ENCODE measurements at regions of chr9 and their contacts with region 1.

Region 1: DNA sequence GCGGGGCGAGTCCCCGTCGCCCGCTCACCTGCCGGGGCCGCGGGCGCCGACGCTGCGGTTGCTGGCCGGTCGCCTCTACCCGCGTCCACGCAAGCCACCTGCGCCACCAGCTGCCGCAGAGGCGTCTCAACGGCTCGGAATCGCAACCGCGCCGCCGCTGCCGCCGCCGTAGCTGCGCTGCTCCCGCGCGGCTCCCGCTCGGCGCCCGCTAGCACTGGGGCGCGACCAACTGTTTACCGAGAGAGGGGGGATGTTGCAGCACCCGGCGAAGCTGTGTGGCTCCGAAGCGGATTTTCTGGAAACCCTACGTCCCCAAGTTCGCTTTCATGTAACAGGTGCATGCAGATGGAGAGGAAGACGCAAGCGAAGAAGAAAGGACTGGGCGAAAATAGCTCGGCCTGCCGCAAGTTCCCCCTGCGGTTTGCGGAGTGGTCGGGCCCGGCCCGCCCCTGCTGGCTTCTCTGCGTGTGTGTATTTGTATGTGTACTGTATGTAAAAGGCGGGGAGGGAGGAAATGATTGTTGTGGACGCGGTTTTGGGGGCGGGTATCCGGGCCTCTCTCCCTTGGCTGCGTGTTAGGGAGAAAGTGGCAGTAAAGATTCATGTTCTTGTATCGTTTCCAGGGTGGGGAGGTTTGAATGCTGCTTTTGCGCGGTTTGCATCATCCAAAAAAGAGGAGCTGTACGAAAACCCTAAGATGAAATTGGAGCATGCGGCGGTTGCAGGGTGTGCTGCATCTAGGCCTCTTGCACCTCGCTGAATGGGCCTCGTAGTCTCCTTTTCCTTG is at the start of gene PSIP1:
- DNase-seq: peak; percentile 82 to 96 (median 94)
- ATAC-seq: peak; percentile 91
- H3K4me3 ChIP-seq: peak within 1 kb of the TSS; percentile 88
- H3K4me3 Mint-ChIP-seq: peak within 1 kb of the TSS; percentile 90 to 99 (median 95)
- H3K27ac ChIP-seq: peak within 1 kb of the TSS; percentile 88
- H3K27ac Mint-ChIP-seq: peak within 1 kb of the TSS; percentile 96 to 100 (median 99)
- H3K4me1 ChIP-seq: peaks cover 19 to 39% of the 10 kb centered on the region in 2 donors
- H3K4me1 Mint-ChIP-seq: peaks cover 44 to 82% (median 66%) of the 10 kb centered on the region in 7 donors
- H3K27me3 ChIP-seq: no peaks in the 10 kb centered on the region
- H3K27me3 Mint-ChIP-seq: no peaks in the 10 kb centered on the region
- total RNA-seq, gene PSIP1: 97.8 to 213 (median 120) TPM

Region 2: GRCh38 chr9:15306757-15307534 is 204.0 kb before region 1 on chr9 and contains the start of gene TTC39B:
- CTCF ChIA-PET with region 1: no interaction called
- POLR2A ChIA-PET with region 1: interaction called, 19 read pairs
- intact Hi-C with region 1: loop called in 1 of 2 experiments (anchors 1 kb)
- DNase-seq: peak; percentile 34 to 88 (median 53)
- ATAC-seq: peak; percentile 87
- H3K4me3 ChIP-seq: peak within 1 kb of the TSS; percentile 86
- H3K4me3 Mint-ChIP-seq: peak within 1 kb of the TSS; percentile 89 to 99 (median 97)
- H3K27ac ChIP-seq: peak within 1 kb of the TSS; percentile 81
- H3K27ac Mint-ChIP-seq: peak within 1 kb of the TSS; percentile 84 to 97 (median 95)
- H3K4me1 ChIP-seq: peaks cover 25 to 44% of the 10 kb centered on the region in 2 donors
- H3K4me1 Mint-ChIP-seq: peaks cover 37 to 66% (median 61%) of the 10 kb centered on the region in 7 donors
- H3K27me3 ChIP-seq: no peaks in the 10 kb centered on the region
- H3K27me3 Mint-ChIP-seq: no peaks in the 10 kb centered on the region
- total RNA-seq, gene TTC39B: 29.1 to 49.3 (median 42.8) TPM

Region 3: GRCh38 chr9:15344191-15344590 is 166.8 kb before region 1 on chr9:
- CTCF ChIA-PET with region 1: no interaction called
- POLR2A ChIA-PET with region 1: no interaction called
- intact Hi-C with region 1: no loop called
- DNase-seq: no peak
- ATAC-seq: no peak
- H3K4me3 ChIP-seq: no peak overlapping the region
- H3K4me3 Mint-ChIP-seq: peak overlapping the region in 1 of 10 donors; percentile 7
- H3K27ac ChIP-seq: no peak overlapping the region
- H3K27ac Mint-ChIP-seq: peak overlapping the region in 1 of 9 donors; percentile 41
- H3K4me1 ChIP-seq: no peaks in the 10 kb centered on the region
- H3K4me1 Mint-ChIP-seq: peaks cover 0 to 5% (median 0%) of the 10 kb centered on the region in 7 donors
- H3K27me3 ChIP-seq: no peaks in the 10 kb centered on the region
- H3K27me3 Mint-ChIP-seq: peaks cover 0 to 2% (median 0%) of the 10 kb centered on the region in 5 donors

Region 4: DNA sequence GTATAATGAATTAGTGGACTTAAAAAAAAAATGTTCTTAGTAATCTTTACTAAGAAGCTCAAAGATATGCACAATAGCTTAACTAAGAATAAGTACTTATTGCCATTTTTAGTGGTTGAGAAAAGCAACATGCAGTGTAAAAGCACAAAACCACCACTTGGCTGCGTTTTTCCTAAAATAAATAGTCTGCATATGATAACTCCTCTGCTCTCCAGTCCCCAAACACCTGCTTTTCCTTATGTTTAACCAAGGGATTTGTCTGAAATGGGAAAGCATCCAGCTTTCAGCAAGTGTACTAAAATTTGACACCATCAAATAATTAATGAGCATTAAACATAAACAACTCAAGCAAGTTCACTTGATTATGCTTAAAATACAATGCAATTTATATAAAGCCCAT is 41.6 kb before region 1 on chr9:
- CTCF ChIA-PET with region 1: interaction called, 3 read pairs
- POLR2A ChIA-PET with region 1: interaction called, 4 read pairs
- intact Hi-C with region 1: loop called in 1 of 2 experiments (anchors 5 kb)
- DNase-seq: no peak
- ATAC-seq: no peak
- H3K4me3 ChIP-seq: no peak overlapping the region
- H3K4me3 Mint-ChIP-seq: no peak overlapping the region
- H3K27ac ChIP-seq: no peak overlapping the region
- H3K27ac Mint-ChIP-seq: peak overlapping the region in 7 of 9 donors; percentile 6 to 82 (median 57)
- H3K4me1 ChIP-seq: no peaks in the 10 kb centered on the region
- H3K4me1 Mint-ChIP-seq: peaks cover 5 to 31% (median 19%) of the 10 kb centered on the region in 7 donors
- H3K27me3 ChIP-seq: no peaks in the 10 kb centered on the region
- H3K27me3 Mint-ChIP-seq: no peaks in the 10 kb centered on the region

Region 5: DNA sequence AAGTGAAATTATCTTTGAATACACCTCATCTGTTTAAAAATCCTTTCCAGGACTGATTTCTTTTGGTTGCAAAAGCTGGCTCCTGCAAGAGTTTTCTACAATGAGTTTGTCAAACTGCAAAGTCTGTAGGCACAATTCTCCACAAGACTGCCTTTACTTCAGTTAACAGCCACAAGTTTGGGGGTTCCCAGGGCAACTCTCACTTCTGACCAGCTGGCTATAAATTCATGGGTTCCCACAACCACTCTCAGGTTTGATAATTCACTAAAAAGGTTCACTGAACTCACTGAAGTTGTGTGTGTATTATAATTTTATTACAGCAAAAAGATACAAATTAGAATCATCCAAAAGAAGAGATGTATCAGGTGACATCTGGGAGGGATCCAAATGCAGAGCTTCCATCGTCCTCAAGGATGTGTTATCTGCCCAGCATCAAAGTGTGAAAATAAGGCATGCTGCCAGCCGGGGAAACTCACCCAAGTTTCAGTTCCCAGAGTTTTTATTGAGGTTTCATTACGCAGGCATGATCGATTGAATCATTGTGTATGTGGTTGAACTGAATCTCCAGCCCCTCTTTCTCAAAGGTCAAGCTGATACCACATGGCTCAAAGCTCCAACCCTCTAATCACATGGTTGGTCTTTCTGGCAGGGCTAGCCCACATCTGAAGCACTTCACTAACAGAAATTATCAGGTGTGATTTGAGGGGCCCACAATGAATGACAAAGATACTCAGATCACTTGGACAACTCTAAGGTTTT is 18.8 kb after region 1 on chr9:
- CTCF ChIA-PET with region 1: interaction called, 3 read pairs
- POLR2A ChIA-PET with region 1: interaction called, 8 read pairs
- intact Hi-C with region 1: loop called in 1 of 2 experiments (anchors 1 kb)
- DNase-seq: no peak
- ATAC-seq: no peak
- H3K4me3 ChIP-seq: no peak overlapping the region
- H3K4me3 Mint-ChIP-seq: no peak overlapping the region
- H3K27ac ChIP-seq: no peak overlapping the region
- H3K27ac Mint-ChIP-seq: no peak overlapping the region
- H3K4me1 ChIP-seq: no peaks in the 10 kb centered on the region
- H3K4me1 Mint-ChIP-seq: peaks cover 0 to 18% (median 7%) of the 10 kb centered on the region in 7 donors
- H3K27me3 ChIP-seq: no peaks in the 10 kb centered on the region
- H3K27me3 Mint-ChIP-seq: peaks cover 0 to 7% (median 0%) of the 10 kb centered on the region in 5 donors

Region 6: DNA sequence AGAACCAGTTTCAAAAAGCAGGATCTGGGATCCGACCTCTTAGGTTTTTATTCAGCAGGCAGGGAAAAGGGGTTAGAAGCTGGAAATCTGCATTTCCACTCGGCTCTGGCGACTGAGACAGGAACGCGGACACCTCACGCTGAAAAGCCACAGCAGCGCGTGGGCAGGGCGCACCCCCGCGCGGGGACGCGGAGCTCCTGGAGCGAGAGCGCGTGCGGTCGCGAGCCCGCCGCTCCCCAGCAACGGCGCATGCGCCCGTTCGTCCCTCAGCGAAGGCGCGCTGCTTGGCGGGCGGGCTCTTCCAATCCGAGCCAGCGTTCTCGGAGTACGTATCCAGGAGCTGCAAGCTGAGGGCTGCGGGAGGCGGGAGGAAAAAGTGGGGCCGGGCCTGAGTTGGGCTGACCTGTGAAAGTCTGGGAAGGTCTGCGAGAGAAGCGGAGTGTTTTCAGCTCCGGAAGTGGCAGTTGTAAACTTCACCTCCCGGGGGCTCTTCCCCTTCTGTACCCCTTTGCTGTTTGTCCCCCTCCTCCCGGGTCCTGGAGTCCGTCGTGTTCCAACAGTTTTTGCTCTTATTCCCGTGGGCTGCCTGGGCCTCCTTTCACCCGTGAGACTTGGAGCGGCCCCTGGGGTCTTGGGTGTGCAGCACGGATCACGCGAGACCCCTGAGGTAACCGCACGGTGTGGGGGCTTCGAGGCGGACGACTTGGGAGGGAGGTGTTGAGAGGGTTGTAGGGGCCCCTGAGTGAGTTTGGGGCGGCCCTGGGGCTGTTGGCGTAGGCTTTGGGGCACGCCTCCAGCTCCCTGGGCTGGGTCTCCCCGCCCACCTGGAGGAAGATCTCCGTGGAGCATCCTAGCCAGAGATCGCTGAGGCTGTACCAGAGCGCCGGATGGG is 41.9 kb after region 1 on chr9 and contains the start of gene CCDC171:
- CTCF ChIA-PET with region 1: interaction called, 5 read pairs
- POLR2A ChIA-PET with region 1: interaction called, 84 read pairs
- intact Hi-C with region 1: loop called (anchors 1 kb)
- DNase-seq: peak; percentile 80 to 89 (median 85)
- ATAC-seq: peak; percentile 92
- H3K4me3 ChIP-seq: peak within 1 kb of the TSS; percentile 65
- H3K4me3 Mint-ChIP-seq: peak within 1 kb of the TSS; percentile 88 to 97 (median 94)
- H3K27ac ChIP-seq: peak within 1 kb of the TSS; percentile 66
- H3K27ac Mint-ChIP-seq: peak within 1 kb of the TSS; percentile 73 to 93 (median 86)
- H3K4me1 ChIP-seq: peaks cover 0 to 11% of the 10 kb centered on the region in 2 donors
- H3K4me1 Mint-ChIP-seq: peaks cover 0 to 23% (median 12%) of the 10 kb centered on the region in 7 donors
- H3K27me3 ChIP-seq: no peaks in the 10 kb centered on the region
- H3K27me3 Mint-ChIP-seq: peaks cover 0 to 39% (median 0%) of the 10 kb centered on the region in 5 donors
- total RNA-seq, gene CCDC171: 0.77 to 3.7 (median 2.7) TPM

Region 7: GRCh38 chr9:17246770-17247169 is 1735.8 kb after region 1 on chr9:
- CTCF ChIA-PET with region 1: no interaction called
- POLR2A ChIA-PET with region 1: no interaction called
- intact Hi-C with region 1: no loop called
- DNase-seq: no peak
- ATAC-seq: no peak
- H3K4me3 ChIP-seq: no peak overlapping the region
- H3K4me3 Mint-ChIP-seq: no peak overlapping the region
- H3K27ac ChIP-seq: no peak overlapping the region
- H3K27ac Mint-ChIP-seq: no peak overlapping the region
- H3K4me1 ChIP-seq: no peaks in the 10 kb centered on the region
- H3K4me1 Mint-ChIP-seq: peaks cover 0 to 1% (median 0%) of the 10 kb centered on the region in 7 donors
- H3K27me3 ChIP-seq: no peaks in the 10 kb centered on the region
- H3K27me3 Mint-ChIP-seq: no peaks in the 10 kb centered on the region